ENCODE measurements at regions of chr5 and their contacts with region 1.

Region 1: DNA sequence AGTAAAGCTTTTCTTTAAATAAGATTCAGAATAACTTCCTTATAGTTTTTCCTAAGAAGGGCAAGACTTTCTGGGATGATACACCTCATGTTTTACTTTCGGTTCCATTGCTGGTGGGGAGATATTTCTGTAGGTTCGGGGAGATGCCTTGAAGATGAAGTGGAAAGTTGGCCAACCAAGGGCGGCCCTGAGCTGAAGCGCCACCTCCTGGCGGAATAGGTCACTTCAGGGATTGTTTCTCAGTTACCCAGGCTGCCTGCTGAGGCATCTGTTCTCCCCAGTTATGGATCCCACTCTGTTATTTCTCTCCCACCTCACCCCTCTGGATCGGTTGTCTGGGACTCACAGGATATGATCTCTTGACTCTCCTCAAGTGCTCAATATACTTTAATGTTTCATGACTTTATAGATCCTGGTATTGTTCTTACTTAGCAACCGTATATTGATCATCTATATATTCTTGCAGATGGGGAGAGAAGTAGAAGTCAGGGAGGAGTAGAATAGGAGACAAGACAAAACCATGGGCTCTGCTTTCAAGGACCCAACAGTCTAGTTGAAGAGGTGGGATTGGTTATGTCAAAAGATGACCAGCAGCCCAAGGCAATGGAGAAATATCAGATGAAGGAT is 23.4 kb downstream of the MEGF10 start:
- DNase-seq: peak; percentile 13
- H3K4me3 ChIP-seq: no peak overlapping the region
- H3K27ac ChIP-seq: no peak overlapping the region
- H3K27me3 ChIP-seq: peaks cover 8% of the 10 kb centered on the region
- CTCF ChIP-seq: peak; percentile 85

Region 2: GRCh38 chr5:126837906-126838539 is 475.9 kb before region 1 on chr5:
- CTCF ChIA-PET with region 1: interaction called, 28 read pairs
- POLR2A ChIA-PET with region 1: no interaction called
- DNase-seq: no peak
- H3K4me3 ChIP-seq: no peak overlapping the region
- H3K27ac ChIP-seq: no peak overlapping the region
- H3K27me3 ChIP-seq: no peaks in the 10 kb centered on the region
- CTCF ChIP-seq: peak; percentile 57

Region 3: DNA sequence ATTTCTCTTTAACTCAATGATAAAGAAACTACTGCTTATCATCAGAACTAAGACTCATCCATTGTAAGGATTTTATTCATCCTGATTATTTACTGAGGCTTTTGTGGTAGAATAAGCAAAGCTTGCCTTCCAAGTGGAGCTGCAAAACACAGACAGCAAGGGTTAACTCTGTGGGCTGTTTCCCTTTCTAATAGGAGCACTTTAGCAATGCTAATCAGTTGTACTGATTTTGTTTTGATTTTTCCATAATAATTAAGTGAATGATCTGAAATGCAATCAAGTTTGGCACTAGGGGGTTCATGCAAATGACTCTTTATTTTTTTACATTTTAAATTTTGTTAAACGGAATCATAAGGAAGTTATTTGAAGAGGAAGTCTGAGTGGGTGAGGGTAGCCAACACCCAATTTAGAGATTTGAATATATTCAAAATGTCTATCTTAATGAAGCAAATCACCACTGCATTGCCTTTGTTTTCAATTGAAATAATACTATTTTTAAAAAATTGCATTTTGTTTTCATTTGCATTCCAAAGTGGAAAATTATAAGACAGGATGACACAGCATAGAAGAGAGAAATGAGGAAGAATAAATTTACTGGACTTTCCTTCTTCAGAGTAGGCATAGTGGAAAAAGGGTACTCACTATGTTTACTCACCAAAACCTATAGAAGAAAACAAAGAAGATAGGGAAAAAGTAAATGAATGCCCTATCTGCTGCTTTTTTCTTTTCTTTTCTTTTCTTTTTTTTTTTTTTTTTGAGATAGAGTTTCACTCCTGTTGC is 13.2 kb after region 1 on chr5:
- CTCF ChIA-PET with region 1: interaction called, 13 read pairs
- POLR2A ChIA-PET with region 1: no interaction called
- DNase-seq: no peak
- H3K4me3 ChIP-seq: no peak overlapping the region
- H3K27ac ChIP-seq: no peak overlapping the region
- H3K27me3 ChIP-seq: peaks cover 4% of the 10 kb centered on the region
- CTCF ChIP-seq: no peak